Activated CD8-positive, alpha-beta T cell treated with anti-CD3 and anti-CD28 coated beads, Interleukin-2, amount 10 ng/mL, durations not matched to agents 7 days and 5 days (primary cell): ENCODE measurements at regions of chr4 and their contacts with region 1.

Region 1: GRCh38 chr4:153466081-153466948 is at the start of gene TMEM131L:
- DNase-seq: peak; percentile 71
- ATAC-seq: peak; percentile 77
- H3K4me3 Mint-ChIP-seq: peak within 1 kb of the TSS; percentile 96
- H3K27ac Mint-ChIP-seq: peak within 1 kb of the TSS; percentile 95
- H3K4me1 Mint-ChIP-seq: peaks cover 39% of the 10 kb centered on the region
- H3K27me3 Mint-ChIP-seq: no peaks in the 10 kb centered on the region
- total RNA-seq, gene TMEM131L: 54.9 to 58.4 TPM

Region 2: DNA sequence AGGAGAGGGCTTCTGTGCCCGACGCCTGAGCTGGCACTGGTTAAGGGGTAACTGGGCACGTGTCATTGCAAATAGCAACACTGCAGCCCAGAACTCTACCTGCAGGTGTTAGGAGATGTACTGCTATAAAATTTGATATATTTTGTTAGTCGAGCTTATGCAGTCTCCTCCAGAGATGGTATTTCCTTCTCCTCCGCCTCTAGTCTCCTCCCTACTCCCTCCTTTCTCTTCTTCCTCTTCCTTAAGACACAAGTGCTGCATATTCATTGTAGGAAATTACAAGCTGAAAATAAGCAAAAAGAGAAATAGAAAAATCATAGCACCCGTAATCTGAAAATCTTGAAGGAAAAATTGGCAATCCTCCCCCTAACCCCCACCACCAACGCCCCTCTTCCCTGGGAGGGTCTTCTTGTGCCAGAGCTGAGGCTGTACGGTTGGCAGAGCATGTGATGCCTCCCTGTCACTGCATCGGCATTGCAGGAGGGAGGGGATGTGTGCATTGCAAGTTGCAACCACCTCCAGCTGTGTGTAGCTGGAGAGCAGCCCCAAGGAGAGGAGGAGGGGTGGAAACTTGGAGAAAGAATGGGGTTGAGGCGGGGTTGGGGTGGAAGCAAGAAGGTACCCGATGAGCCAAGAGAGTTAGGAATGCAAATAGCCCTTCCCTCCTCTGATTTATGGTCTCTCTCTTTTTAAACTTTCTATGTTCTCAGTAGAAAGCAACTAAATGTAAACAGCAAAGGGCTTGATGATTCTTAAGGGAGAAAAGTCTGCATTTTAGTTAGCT is 170.1 kb before region 1 on chr4:
- CTCF ChIA-PET with region 1: no interaction called
- POLR2A ChIA-PET with region 1: no interaction called
- DNase-seq: no peak
- ATAC-seq: no peak
- H3K4me3 Mint-ChIP-seq: no peak overlapping the region
- H3K27ac Mint-ChIP-seq: no peak overlapping the region
- H3K4me1 Mint-ChIP-seq: no peaks in the 10 kb centered on the region
- H3K27me3 Mint-ChIP-seq: peaks cover 7% of the 10 kb centered on the region

Region 3: DNA sequence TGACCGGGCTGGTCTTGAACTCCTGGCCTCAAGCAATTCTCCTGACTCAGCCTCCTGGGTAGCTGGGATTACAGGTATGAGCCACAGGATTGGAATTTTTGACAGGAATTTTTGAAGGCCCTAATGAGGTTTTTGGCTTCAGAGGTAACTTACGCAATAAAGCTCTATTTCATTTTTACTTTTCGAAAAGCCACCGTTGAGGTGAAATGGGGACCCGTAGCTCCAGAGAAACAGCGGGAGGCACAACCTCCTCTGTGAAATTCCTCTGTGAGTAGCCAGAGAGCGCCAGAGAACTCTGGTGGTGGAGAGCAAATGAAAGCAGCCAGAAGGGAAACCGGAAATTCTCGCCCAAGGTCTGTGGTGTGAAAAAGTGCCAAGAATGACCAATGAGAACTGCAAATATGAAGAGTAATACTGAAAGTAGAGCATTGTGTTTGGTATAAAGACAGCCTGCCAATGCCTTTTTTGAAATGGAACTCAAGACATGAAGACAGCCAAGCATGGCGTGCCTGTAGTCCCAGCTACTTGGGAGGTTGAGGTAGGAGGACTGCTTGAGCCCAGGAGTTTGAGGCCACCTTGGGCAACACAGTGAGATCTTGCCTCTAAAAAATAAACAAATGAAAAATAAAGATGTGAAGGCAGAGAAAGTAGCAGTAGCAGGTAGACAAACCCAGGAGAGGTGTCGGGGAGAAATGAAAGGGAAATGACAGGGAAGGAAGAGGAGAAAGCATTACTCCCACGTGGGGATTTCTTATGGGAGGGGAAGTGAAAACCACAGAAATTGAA is 33.2 kb before region 1 on chr4:
- CTCF ChIA-PET with region 1: interaction called, 42 read pairs
- POLR2A ChIA-PET with region 1: interaction called, 46 read pairs
- DNase-seq: peak; percentile 90
- ATAC-seq: peak; percentile 82
- H3K4me3 Mint-ChIP-seq: peak overlapping the region; percentile 78
- H3K27ac Mint-ChIP-seq: peak overlapping the region; percentile 95
- H3K4me1 Mint-ChIP-seq: peaks cover 77% of the 10 kb centered on the region
- H3K27me3 Mint-ChIP-seq: no peaks in the 10 kb centered on the region

Region 4: GRCh38 chr4:153453402-153453801 is 12.9 kb before region 1 on chr4:
- CTCF ChIA-PET with region 1: interaction called, 41 read pairs
- POLR2A ChIA-PET with region 1: interaction called, 13 read pairs
- DNase-seq: no peak
- ATAC-seq: no peak
- H3K4me3 Mint-ChIP-seq: no peak overlapping the region
- H3K27ac Mint-ChIP-seq: no peak overlapping the region
- H3K4me1 Mint-ChIP-seq: peaks cover 41% of the 10 kb centered on the region
- H3K27me3 Mint-ChIP-seq: no peaks in the 10 kb centered on the region

Region 5: DNA sequence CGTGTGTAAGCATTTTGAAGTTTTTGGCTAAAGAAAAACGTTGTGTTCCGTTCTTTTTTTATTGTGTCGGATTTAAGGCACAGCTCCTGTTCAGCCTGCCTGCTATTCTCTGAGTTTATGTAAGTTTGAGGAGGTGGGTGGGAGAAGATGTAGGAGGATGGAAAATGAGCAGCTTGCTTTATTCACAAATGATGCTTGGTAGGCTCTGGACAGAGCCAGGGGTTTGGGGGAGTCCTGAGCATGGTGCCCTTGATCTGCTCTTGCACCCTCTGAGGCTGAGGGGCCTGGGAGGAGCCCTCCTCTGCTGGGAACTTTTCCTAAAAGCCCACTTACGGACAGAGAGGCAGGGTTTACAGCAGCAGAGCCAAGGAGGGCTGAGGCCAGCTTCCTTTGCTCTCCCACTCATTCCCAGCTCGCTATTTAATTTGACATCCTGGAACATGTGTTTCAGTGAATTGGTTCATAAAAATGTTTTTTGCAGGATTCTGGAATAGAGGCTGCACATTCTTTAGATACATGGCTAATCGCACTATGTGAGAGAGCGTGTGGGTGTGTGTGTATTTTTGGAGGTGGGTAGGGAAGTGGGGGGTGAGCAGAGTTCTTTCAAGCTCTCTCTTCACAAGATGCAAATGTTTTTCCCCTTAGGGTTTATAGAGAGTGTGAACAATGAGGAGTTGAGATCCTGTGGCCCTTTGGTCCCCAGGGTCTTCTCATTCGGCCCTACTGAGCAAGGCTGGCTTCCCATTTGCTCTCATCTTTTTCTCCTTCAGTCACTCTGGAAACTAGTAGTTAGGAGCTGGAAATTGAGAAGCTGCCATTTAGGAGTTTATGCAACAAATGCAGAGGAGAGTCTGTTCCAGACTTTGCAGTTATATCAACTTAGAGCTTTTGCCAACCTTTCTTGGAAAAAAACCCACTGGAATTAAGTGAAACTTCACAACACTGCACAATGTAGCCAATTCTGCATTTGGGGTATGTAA is 32.0 kb after region 1 on chr4:
- CTCF ChIA-PET with region 1: interaction called, 52 read pairs
- POLR2A ChIA-PET with region 1: interaction called, 11 read pairs
- DNase-seq: no peak
- ATAC-seq: no peak
- H3K4me3 Mint-ChIP-seq: peak overlapping the region; percentile 67
- H3K27ac Mint-ChIP-seq: peak overlapping the region; percentile 91
- H3K4me1 Mint-ChIP-seq: peaks cover 92% of the 10 kb centered on the region
- H3K27me3 Mint-ChIP-seq: no peaks in the 10 kb centered on the region

Region 6: DNA sequence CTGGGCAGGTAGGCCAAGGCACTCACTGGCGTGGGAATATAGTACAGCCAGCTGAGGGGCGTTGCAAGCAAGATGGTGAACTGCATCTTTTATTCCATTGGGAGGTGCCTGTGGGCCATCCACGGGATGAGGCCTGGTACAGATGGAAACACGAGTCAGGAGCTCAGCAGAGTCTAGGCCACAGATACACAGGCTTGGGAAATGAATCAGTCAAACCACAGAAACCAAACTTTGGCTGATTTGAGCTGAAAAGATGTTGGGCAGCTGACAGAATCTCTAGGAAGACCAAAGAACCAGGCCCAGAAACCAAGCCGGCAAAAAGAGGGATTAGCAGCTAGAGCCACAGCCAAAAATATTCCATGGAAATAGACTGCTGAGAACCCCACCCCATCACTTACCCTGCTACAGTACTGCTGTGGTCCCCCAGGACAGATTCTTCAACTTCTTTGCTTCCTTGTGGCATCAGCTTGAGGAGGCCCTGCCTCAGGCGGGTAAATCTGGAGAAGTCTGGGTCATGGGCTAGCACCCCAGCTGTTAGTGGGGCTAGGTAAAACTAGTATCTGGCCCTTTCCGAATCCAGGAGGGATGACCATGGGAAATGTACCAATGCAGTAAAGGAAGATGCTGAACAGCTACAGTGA is 75.3 kb after region 1 on chr4:
- CTCF ChIA-PET with region 1: interaction called, 10 read pairs
- POLR2A ChIA-PET with region 1: interaction called, 3 read pairs
- DNase-seq: peak; percentile 38
- ATAC-seq: peak; percentile 66
- H3K4me3 Mint-ChIP-seq: no peak overlapping the region
- H3K27ac Mint-ChIP-seq: peak overlapping the region; percentile 27
- H3K4me1 Mint-ChIP-seq: peaks cover 60% of the 10 kb centered on the region
- H3K27me3 Mint-ChIP-seq: no peaks in the 10 kb centered on the region

Region 7: GRCh38 chr4:153655928-153656327 is 189.6 kb after region 1 on chr4:
- CTCF ChIA-PET with region 1: no interaction called
- POLR2A ChIA-PET with region 1: no interaction called
- DNase-seq: no peak
- ATAC-seq: no peak
- H3K4me3 Mint-ChIP-seq: no peak overlapping the region
- H3K27ac Mint-ChIP-seq: no peak overlapping the region
- H3K4me1 Mint-ChIP-seq: peaks cover 17% of the 10 kb centered on the region
- H3K27me3 Mint-ChIP-seq: peaks cover 6% of the 10 kb centered on the region